HEK293 (cell line): ENCODE measurements at regions of chr10 and their contacts with region 1.

Region 1: GRCh38 chr10:101879456-101880231 is 36.0 kb upstream of the KCNIP2 start:
- H3K4me3 ChIP-seq: no peak overlapping the region
- H3K27ac ChIP-seq: no peak overlapping the region
- H3K4me1 ChIP-seq: no peaks in the 10 kb centered on the region; the same call in 1 of the 2 replicates
- CTCF ChIP-seq: no peak

Region 2: DNA sequence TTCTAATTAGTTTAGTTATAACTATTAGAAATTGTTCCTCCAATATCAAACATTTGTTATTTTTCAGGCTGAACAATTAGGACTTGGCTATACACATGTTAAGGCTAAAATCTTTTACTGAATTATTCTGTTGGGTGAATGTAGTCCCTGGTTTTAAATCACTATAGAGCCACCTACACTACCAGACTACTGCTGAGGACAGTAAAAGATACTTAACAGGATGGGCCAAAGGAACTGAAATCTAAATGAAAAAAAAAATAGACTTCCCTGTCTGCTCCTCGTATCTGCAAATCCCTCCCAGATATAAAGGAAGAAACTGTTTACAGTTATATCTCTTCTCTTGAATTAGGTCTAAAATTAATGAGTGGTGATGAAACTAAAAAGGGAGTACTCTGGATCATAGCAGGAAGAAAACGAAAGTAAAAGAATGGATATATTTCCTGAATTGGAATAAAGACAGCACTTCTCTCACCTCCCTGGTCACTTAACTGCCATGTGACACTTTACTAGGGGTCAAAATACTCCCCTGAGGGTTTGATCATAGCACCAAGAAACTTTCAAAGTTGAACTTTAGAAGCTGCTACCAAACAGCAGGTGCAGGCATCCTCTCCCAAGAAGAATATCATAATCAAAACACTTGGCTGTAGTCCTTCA is 197.3 kb before region 1 on chr10:
- CTCF ChIA-PET with region 1: no interaction called
- POLR2A ChIA-PET with region 1: no interaction called
- H3K4me3 ChIP-seq: no peak overlapping the region
- H3K27ac ChIP-seq: no peak overlapping the region
- H3K4me1 ChIP-seq: peaks cover 20% of the 10 kb centered on the region
- CTCF ChIP-seq: no peak

Region 3: GRCh38 chr10:101848894-101849351 is 30.7 kb before region 1 on chr10:
- CTCF ChIA-PET with region 1: no interaction called
- POLR2A ChIA-PET with region 1: no interaction called
- H3K4me3 ChIP-seq: no peak overlapping the region
- H3K27ac ChIP-seq: no peak overlapping the region
- H3K4me1 ChIP-seq: no peaks in the 10 kb centered on the region
- CTCF ChIP-seq: no peak

Region 4: GRCh38 chr10:101859530-101859929 is 20.1 kb before region 1 on chr10:
- CTCF ChIA-PET with region 1: no interaction called
- POLR2A ChIA-PET with region 1: no interaction called
- H3K4me3 ChIP-seq: no peak overlapping the region
- H3K27ac ChIP-seq: no peak overlapping the region
- H3K4me1 ChIP-seq: no peaks in the 10 kb centered on the region
- CTCF ChIP-seq: no peak

Region 5: DNA sequence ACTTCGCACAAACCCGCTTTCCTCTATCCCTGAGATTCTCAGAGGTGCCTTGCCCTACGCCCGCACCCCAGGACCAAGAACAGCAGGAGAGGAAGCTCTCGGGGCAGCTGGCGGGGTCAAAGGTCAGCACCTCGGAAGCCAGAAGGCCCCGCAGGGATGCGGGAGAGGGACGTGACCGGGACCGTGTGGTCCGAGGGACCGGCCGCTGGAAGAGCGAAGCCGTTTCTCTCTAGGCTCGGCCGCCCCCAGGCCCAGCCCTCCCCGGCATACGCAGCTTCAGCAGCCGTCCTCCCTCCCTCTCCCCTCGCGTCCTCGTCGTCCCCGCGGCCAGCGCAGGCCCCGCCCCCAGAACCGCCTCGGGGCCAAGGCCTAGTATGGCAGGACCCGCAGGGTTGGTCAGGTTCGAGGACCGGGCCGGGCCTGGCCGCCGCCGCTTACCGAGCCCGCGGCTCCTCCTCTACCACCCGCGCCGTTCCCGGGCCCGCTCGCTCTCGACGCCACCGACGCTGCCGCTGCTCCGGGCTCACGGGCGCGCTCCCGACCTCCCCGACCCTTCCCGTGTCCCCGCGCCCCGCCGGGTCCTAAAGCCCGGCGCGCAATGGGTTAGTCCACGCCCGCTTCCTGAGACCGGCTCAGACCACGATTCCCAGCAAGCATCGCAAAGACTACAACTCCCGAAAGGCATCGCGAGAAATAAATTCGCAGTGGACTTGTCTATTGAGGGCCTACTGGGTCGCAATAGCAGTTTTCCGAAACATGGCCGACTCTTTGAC is 176.2 kb after region 1 on chr10 and contains the start of gene ARMH3:
- CTCF ChIA-PET with region 1: no interaction called
- POLR2A ChIA-PET with region 1: interaction called, 10 read pairs
- H3K4me3 ChIP-seq: peak within 1 kb of the TSS; percentile 64
- H3K27ac ChIP-seq: peak within 1 kb of the TSS; percentile 81
- H3K4me1 ChIP-seq: peaks cover 10% of the 10 kb centered on the region
- CTCF ChIP-seq: peak; percentile 14; the same call in 1 of the 2 replicates

Region 6: DNA sequence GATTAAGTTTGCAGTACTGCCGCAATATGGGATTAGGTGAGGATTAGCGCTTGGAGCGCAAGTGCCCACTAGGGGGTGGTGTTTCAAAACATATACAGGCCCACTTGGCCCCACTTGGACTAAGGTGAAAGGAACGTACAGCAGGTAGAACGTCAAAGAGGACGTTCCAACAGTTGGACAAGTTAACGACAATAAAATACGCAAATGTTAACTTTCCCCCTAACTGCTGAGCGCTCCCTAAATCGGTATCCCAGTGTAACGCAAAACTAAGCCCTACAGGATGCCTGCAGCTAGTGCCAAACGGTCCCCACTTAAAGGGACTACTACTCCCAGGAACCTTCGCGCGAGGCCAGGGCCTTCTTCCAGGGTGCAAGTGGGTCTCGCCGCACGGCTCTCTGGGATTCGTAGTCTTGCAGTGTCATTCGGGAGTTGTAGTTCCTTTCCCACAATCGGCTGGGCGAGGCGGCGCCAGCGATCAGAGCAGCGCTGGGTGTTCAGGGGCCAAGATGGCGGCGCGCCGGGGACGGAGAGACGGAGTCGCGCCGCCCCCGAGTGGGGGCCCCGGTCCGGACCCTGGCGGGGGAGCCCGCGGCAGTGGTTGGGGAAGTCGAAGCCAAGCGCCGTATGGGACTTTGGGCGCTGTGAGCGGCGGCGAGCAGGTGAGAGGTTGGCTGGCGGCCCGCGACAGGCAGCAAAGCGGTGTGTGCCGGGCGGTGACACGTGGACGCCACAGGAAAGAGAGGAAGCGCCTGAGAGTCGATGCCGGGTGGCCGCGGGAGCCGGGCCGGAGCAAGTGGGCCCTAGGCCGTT is 253.1 kb after region 1 on chr10 and contains the start of gene PPRC1:
- CTCF ChIA-PET with region 1: no interaction called
- POLR2A ChIA-PET with region 1: no interaction called
- H3K4me3 ChIP-seq: peak within 1 kb of the TSS; percentile 93
- H3K27ac ChIP-seq: peak within 1 kb of the TSS; percentile 99
- H3K4me1 ChIP-seq: peaks cover 22% of the 10 kb centered on the region
- CTCF ChIP-seq: peak; percentile 98